ENCODE measurements at regions of chr7 and their contacts with region 1.

Region 1: GRCh38 chr7:134514663-134515062 is 12.7 kb upstream of the AKR1B10 start:
- DNase-seq: peak; percentile 77
- H3K4me3 ChIP-seq: no peak overlapping the region
- H3K27ac ChIP-seq: no peak overlapping the region
- H3K4me1 ChIP-seq: no peaks in the 10 kb centered on the region
- CTCF ChIP-seq: peak; percentile 86

Region 2: DNA sequence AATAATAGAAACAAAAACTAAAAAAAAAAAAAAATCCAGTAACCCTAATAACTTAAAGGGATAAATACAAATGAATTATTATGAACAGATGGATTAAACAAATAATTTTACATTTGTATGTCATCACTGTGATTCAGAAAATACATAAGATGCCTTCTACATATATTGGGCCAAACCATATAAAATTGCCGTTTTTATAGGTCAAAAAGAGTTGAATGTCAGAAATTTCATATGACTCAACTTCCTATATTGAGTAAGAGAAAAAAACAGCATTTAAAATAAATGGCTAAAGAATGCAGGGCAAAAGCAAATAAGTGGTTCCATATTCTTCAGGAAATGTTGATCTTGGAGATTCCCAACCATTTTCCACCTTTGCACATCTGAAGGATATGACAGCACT is 207.3 kb before region 1 on chr7:
- CTCF ChIA-PET with region 1: no interaction called
- POLR2A ChIA-PET with region 1: no interaction called
- intact Hi-C with region 1: no loop called
- DNase-seq: no peak
- H3K4me3 ChIP-seq: no peak overlapping the region
- H3K27ac ChIP-seq: no peak overlapping the region
- H3K4me1 ChIP-seq: no peaks in the 10 kb centered on the region
- CTCF ChIP-seq: no peak

Region 3: DNA sequence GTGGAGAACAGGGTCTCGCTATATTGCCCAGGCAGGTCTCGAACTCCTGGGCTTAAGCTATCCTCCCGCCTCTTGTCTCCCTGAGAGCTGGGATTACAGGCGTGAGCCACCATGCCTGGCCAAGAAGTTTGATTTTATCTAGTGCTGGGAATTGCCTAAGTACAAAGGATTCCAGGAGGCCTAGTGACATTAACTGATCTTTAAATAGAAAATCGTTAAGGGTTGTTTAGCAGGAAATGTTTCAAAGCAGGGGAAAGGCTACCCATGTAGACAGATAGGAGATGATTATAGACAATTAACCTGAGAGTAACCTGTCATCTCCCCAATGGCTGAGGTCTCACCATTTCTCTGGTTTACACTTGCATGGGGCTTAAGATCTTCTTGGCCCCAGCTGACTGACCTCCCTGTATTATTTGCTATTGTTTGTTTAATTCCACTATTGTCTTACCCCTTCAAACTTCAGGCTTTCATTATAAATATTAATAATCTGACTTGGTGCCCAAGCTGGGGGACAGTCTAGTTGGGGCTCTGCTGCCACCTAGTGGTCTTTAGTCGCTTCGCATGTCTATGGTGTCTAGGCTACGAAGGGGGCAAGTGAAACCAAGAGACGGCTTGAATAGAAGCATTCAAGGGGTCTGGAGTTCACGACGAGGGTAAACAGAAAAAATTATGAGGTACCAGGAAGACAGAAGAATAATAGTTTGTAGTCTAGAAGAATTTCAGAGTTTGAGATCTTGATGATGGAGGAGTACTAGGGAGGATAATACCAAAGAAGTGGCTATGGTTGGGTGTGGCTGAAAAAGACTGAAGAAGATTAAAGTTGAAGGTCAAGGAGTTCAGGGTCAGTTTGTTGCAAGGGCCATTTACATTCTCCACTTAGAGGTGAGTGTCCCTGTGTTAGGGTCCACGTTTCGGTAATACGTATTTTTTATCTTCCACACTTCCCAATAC is 91.6 kb after region 1 on chr7:
- CTCF ChIA-PET with region 1: no interaction called
- POLR2A ChIA-PET with region 1: no interaction called
- intact Hi-C with region 1: loop called (anchors 1 kb)
- DNase-seq: peak; percentile 66
- H3K4me3 ChIP-seq: no peak overlapping the region
- H3K27ac ChIP-seq: no peak overlapping the region
- H3K4me1 ChIP-seq: no peaks in the 10 kb centered on the region
- CTCF ChIP-seq: peak; percentile 98

Region 4: DNA sequence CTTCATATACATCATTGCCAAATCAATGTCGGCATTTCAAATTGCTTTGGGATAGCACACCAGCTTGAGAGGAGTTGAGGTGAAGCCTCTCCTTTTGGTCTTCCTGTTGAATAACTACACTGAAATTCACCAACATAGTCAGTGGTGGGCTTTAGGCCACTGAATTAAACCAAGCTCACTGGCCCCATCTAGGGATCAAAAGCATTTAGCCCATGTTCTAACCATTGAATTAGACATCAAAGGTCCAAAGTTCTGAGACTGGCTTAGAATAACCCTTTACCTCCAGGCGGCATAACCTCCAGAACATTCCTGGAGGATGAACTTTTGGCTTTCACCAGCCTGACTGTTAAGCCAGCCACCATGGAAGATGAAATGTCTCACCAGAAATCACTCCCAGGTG is 186.6 kb after region 1 on chr7:
- CTCF ChIA-PET with region 1: no interaction called
- POLR2A ChIA-PET with region 1: no interaction called
- intact Hi-C with region 1: loop called (anchors 1 kb)
- DNase-seq: peak; percentile 60
- H3K4me3 ChIP-seq: no peak overlapping the region
- H3K27ac ChIP-seq: no peak overlapping the region
- H3K4me1 ChIP-seq: no peaks in the 10 kb centered on the region
- CTCF ChIP-seq: peak; percentile 78